ENCODE measurements at regions of chr2 and their contacts with region 1.

Region 1: GRCh38 chr2:48284621-48285212 is 245.2 kb upstream of the STON1 start:
- DNase-seq: no peak
- ATAC-seq: no peak
- H3K4me3 ChIP-seq: no peak overlapping the region
- H3K27ac ChIP-seq: no peak overlapping the region
- H3K4me1 ChIP-seq: no peaks in the 10 kb centered on the region
- H3K27me3 ChIP-seq: no peaks in the 10 kb centered on the region
- CTCF ChIP-seq: no peak
- EP300 ChIP-seq: no peak
- POLR2A ChIP-seq: no peak
- RAD21 ChIP-seq: no peak

Region 2: GRCh38 chr2:47984041-47984440 is 300.7 kb before region 1 on chr2:
- CTCF ChIA-PET with region 1: no interaction called
- POLR2A ChIA-PET with region 1: no interaction called
- RAD21 ChIA-PET with region 1: no interaction called
- SMC1A ChIA-PET with region 1: no interaction called
- in situ Hi-C with region 1: no loop called
- intact Hi-C with region 1: no loop called
- DNase-seq: no peak
- ATAC-seq: peak; percentile 45
- H3K4me3 ChIP-seq: no peak overlapping the region
- H3K27ac ChIP-seq: no peak overlapping the region
- H3K4me1 ChIP-seq: no peaks in the 10 kb centered on the region; the same call in 1 of the 2 replicates
- H3K27me3 ChIP-seq: peaks cover 0 to 7% of the 10 kb centered on the region in 2 experiments; a peak in 2 of 4 replicates
- CTCF ChIP-seq: no peak
- EP300 ChIP-seq: no peak
- POLR2A ChIP-seq: no peak
- RAD21 ChIP-seq: no peak

Region 3: GRCh38 chr2:48209214-48209885 is 75.4 kb before region 1 on chr2:
- CTCF ChIA-PET with region 1: no interaction called
- POLR2A ChIA-PET with region 1: no interaction called
- RAD21 ChIA-PET with region 1: no interaction called
- SMC1A ChIA-PET with region 1: no interaction called
- in situ Hi-C with region 1: no loop called
- intact Hi-C with region 1: no loop called
- DNase-seq: no peak
- ATAC-seq: no peak; the same call in 2 of the 3 replicates
- H3K4me3 ChIP-seq: no peak overlapping the region
- H3K27ac ChIP-seq: no peak overlapping the region
- H3K4me1 ChIP-seq: no peaks in the 10 kb centered on the region
- H3K27me3 ChIP-seq: no peaks in the 10 kb centered on the region
- CTCF ChIP-seq: no peak
- EP300 ChIP-seq: no peak
- POLR2A ChIP-seq: no peak
- RAD21 ChIP-seq: no peak

Region 4: DNA sequence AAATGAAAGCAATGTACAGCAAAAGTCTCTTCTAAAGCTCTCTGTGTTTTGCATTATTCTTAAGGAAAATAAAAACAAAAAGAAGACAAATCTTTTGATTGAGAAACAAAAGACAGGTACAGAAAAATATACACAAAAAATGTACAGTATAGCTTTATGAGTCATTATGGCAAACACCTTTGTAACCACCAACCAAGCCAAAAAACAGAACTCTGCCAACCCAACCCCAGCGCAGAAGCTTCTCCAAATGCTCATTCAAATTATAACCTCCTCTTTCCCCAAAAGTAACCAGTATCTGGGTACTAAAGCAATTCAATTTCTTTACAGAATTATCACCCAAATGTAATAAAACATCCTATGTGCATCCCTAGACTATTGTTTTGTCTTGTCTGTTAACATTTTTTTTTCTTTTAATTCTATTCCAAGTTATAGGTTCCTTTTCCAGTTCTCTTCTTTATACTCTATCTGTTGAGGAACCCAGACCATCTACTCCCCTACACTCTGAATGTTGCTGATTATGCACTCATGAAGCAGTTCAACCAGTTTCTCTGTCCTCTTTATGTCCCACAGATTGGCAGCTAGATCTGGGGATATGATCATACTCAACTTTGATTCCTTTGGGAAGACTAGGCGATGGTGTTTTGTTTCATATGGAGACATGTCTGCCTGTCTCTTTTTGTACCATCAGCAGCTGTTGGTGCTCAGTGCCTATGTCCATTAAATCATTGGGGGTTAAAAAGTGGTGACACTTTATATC is 10.5 kb before region 1 on chr2:
- CTCF ChIA-PET with region 1: interaction called, 3 read pairs
- POLR2A ChIA-PET with region 1: interaction called, 3 read pairs
- RAD21 ChIA-PET with region 1: no interaction called
- SMC1A ChIA-PET with region 1: interaction called, 11 read pairs
- in situ Hi-C with region 1: no loop called
- intact Hi-C with region 1: no loop called
- DNase-seq: no peak
- ATAC-seq: peak; percentile 56
- H3K4me3 ChIP-seq: no peak overlapping the region
- H3K27ac ChIP-seq: no peak overlapping the region
- H3K4me1 ChIP-seq: peaks cover 5% of the 10 kb centered on the region; the same call in 1 of the 2 replicates
- H3K27me3 ChIP-seq: no peaks in the 10 kb centered on the region
- CTCF ChIP-seq: no peak
- EP300 ChIP-seq: no peak
- POLR2A ChIP-seq: no peak
- RAD21 ChIP-seq: no peak

Region 5: GRCh38 chr2:48461721-48462120 is 177.0 kb after region 1 on chr2:
- CTCF ChIA-PET with region 1: no interaction called
- POLR2A ChIA-PET with region 1: no interaction called
- RAD21 ChIA-PET with region 1: no interaction called
- SMC1A ChIA-PET with region 1: no interaction called
- in situ Hi-C with region 1: no loop called
- intact Hi-C with region 1: no loop called
- DNase-seq: no peak
- ATAC-seq: no peak
- H3K4me3 ChIP-seq: no peak overlapping the region
- H3K27ac ChIP-seq: no peak overlapping the region
- H3K4me1 ChIP-seq: no peaks in the 10 kb centered on the region
- H3K27me3 ChIP-seq: no peaks in the 10 kb centered on the region
- CTCF ChIP-seq: no peak
- EP300 ChIP-seq: no peak
- POLR2A ChIP-seq: no peak
- RAD21 ChIP-seq: no peak

Region 6: GRCh38 chr2:48508461-48509124 is 223.9 kb after region 1 on chr2:
- CTCF ChIA-PET with region 1: no interaction called
- POLR2A ChIA-PET with region 1: no interaction called
- RAD21 ChIA-PET with region 1: no interaction called
- SMC1A ChIA-PET with region 1: no interaction called
- in situ Hi-C with region 1: no loop called
- intact Hi-C with region 1: no loop called
- DNase-seq: no peak
- ATAC-seq: no peak
- H3K4me3 ChIP-seq: no peak overlapping the region
- H3K27ac ChIP-seq: no peak overlapping the region; the same call in 1 of the 2 replicates
- H3K4me1 ChIP-seq: no peaks in the 10 kb centered on the region
- H3K27me3 ChIP-seq: no peaks in the 10 kb centered on the region
- CTCF ChIP-seq: no peak
- EP300 ChIP-seq: no peak
- POLR2A ChIP-seq: no peak
- RAD21 ChIP-seq: no peak